Sigmoid colon (tissue), 7 donors: ENCODE measurements at regions of chr9 and their contacts with region 1.

Region 1: GRCh38 chr9:101951598-101951997 is 213.2 kb upstream of the GRIN3A start:
- DNase-seq: no peak
- H3K4me3 ChIP-seq: no peak overlapping the region
- H3K27ac ChIP-seq: no peak overlapping the region
- H3K4me1 ChIP-seq: no peaks in the 10 kb centered on the region
- H3K27me3 ChIP-seq: no peaks in the 10 kb centered on the region
- CTCF ChIP-seq: no peak
- EP300 ChIP-seq: no peak
- POLR2A ChIP-seq: no peak

Region 2: GRCh38 chr9:101893661-101894646 is 57.6 kb before region 1 on chr9:
- intact Hi-C with region 1: no loop called
- DNase-seq: no peak
- H3K4me3 ChIP-seq: no peak overlapping the region
- H3K27ac ChIP-seq: no peak overlapping the region
- H3K4me1 ChIP-seq: no peaks in the 10 kb centered on the region
- H3K27me3 ChIP-seq: no peaks in the 10 kb centered on the region
- CTCF ChIP-seq: no peak
- EP300 ChIP-seq: no peak
- POLR2A ChIP-seq: no peak

Region 3: GRCh38 chr9:101966691-101967090 is 15.1 kb after region 1 on chr9:
- intact Hi-C with region 1: loop called (anchors 1 kb)
- DNase-seq: no peak
- H3K4me3 ChIP-seq: no peak overlapping the region
- H3K27ac ChIP-seq: no peak overlapping the region
- H3K4me1 ChIP-seq: no peaks in the 10 kb centered on the region
- H3K27me3 ChIP-seq: no peaks in the 10 kb centered on the region
- CTCF ChIP-seq: no peak
- EP300 ChIP-seq: no peak
- POLR2A ChIP-seq: no peak